Activated T-helper 2 cell treated with anti-CD3 and anti-CD28 coated beads, Interferon-gamma antibody, Interleukin-2, Interleukin-4, amounts not matched to agents 10 μg/mL and 5 μg/mL and 100 μg/mL, durations not matched to agents 14 hours and 24 hours and 36 hours (primary cell): ENCODE measurements at regions of chr5 and their contacts with region 1.

Region 1: DNA sequence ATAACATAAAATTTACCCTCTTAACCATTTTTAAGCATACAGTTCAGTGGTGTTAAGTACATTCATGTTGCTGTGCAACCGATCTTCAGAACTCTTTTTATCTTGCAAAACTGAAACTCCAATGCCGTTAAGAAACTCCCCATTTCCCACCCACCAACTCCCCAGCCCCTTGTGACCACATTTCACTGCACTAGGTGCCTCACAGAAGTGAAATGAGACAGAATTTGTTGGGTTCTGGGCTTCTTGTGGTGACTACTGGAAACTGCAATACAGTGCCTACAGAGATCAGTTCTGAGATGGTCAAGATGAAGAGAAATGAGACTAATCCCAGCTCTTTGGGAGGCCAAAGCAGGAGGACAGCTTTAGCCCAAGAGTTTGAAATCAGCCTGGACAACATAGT is 202.1 kb upstream of the SLC30A5 start:
- DNase-seq: peak; percentile 48
- H3K4me3 Mint-ChIP-seq: no peak overlapping the region
- H3K27ac Mint-ChIP-seq: peak overlapping the region; percentile 39
- H3K4me1 Mint-ChIP-seq: peaks cover 65% of the 10 kb centered on the region
- H3K27me3 Mint-ChIP-seq: no peaks in the 10 kb centered on the region

Region 2: DNA sequence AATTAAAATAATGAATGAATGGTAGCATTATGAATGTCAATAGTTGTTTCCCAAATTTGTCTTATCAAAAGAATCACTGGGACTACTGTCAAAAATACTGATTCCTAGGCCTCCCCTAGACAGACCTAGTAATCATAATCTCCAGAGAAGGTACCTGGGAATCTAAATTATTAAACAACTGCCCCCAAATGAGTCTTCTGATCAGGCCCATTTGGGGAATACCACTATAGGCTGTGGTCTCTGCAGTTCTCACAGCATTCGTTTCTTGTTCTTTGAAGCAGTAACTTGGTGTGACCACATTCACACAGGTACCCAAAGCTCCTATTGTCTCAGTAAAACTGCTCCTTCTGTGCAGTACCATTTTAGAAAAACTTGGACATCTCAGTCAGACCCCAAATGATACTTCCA is 445.2 kb before region 1 on chr5:
- intact Hi-C with region 1: no loop called
- DNase-seq: no peak
- H3K4me3 Mint-ChIP-seq: no peak overlapping the region
- H3K27ac Mint-ChIP-seq: no peak overlapping the region
- H3K4me1 Mint-ChIP-seq: peaks cover 10% of the 10 kb centered on the region
- H3K27me3 Mint-ChIP-seq: peaks cover 22% of the 10 kb centered on the region

Region 3: DNA sequence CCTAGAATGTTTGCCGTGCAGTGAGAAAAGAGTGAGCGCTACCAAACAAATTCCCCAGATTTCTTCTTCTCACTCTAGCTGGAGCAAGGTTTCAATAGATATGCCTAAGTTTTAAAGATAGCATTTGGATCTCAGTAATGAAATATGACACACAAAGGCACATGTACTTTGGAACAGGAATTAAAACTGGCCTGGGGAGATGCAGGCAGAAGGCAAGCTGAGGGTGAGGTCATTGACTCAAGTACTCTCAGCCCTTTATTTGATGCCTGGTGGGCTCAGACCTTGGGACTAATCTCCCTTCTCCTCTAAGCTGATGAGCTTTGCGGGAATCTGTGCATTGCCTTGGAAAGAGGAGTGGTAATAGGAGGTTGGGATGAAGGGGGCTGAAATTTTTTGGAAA is 121.2 kb before region 1 on chr5:
- intact Hi-C with region 1: no loop called
- DNase-seq: no peak
- H3K4me3 Mint-ChIP-seq: no peak overlapping the region
- H3K27ac Mint-ChIP-seq: no peak overlapping the region
- H3K4me1 Mint-ChIP-seq: no peaks in the 10 kb centered on the region
- H3K27me3 Mint-ChIP-seq: peaks cover 6% of the 10 kb centered on the region

Region 4: GRCh38 chr5:68862560-68862959 is 29.2 kb before region 1 on chr5:
- intact Hi-C with region 1: no loop called
- DNase-seq: no peak
- H3K4me3 Mint-ChIP-seq: no peak overlapping the region
- H3K27ac Mint-ChIP-seq: no peak overlapping the region
- H3K4me1 Mint-ChIP-seq: no peaks in the 10 kb centered on the region
- H3K27me3 Mint-ChIP-seq: peaks cover 10% of the 10 kb centered on the region

Region 5: DNA sequence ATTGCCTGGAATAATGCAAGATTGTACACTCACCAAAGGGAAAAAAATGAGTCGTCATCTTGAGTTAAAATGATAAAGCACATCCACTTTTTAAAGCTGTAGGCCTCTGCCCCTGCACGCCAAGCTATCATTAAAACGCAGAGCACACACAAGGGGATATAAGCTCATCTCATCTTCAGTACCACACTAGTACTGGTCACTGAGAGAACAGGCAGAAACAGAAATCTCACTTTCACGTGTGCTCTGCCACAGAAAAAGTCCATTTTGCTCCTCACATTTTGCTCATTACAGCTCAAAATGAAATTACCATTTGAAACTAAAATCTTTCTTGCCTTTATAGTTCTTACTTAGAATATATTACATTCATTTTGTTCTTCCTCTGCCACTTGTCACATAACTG is 102.9 kb after region 1 on chr5:
- intact Hi-C with region 1: loop called (anchors 2 kb)
- DNase-seq: no peak
- H3K4me3 Mint-ChIP-seq: no peak overlapping the region
- H3K27ac Mint-ChIP-seq: no peak overlapping the region
- H3K4me1 Mint-ChIP-seq: peaks cover 18% of the 10 kb centered on the region
- H3K27me3 Mint-ChIP-seq: peaks cover 2% of the 10 kb centered on the region

Region 6: DNA sequence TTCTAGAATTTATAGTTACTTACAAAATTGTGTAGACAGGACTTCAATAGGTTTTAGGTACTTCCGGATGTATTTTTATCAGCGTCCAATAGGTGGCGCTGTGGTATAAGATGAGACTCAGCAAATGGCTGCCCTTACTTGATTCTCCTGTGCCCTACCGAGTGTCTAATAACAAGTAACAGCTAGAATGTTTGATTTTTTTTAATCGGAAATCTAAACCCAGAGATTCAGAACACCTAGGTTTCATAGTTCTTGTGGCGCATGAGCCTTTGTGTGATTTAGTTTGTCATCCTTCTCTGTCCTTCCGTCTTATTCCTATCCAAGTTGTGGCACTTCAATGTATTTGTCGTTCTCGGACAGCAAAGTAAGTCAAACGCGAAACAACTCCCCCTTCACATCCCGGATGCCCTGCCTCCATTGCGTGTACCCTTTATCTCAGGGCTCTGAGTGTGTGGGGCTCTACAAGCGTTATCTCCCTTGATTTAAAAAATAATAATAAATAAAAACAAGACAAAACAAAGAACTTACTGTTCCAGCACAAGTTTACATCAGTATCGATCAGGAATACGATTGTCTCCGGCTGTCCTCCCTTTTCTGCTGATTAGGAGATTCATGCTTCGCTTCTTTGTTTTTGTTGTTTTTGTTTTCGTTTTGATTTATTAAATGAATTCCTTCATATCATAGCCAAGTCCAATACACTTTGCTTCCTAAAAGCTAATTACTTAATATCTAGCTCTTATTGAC is 151.4 kb after region 1 on chr5:
- intact Hi-C with region 1: no loop called
- DNase-seq: peak; percentile 73
- H3K4me3 Mint-ChIP-seq: peak overlapping the region; percentile 82
- H3K27ac Mint-ChIP-seq: peak overlapping the region; percentile 72
- H3K4me1 Mint-ChIP-seq: peaks cover 19% of the 10 kb centered on the region
- H3K27me3 Mint-ChIP-seq: no peaks in the 10 kb centered on the region